Activated CD4-positive, alpha-beta memory T cell treated with anti-CD3 and anti-CD28 coated beads for 36 hours (primary cell): ENCODE measurements at regions of chr14 and their contacts with region 1.

Region 1: GRCh38 chr14:68780358-68781160 is 12.3 kb downstream of the ZFP36L1 start:
- DNase-seq: peak; percentile 55
- H3K4me3 Mint-ChIP-seq: peak overlapping the region; percentile 71
- H3K27ac Mint-ChIP-seq: peak overlapping the region; percentile 80
- H3K4me1 Mint-ChIP-seq: peaks cover 78% of the 10 kb centered on the region
- H3K27me3 Mint-ChIP-seq: no peaks in the 10 kb centered on the region

Region 2: DNA sequence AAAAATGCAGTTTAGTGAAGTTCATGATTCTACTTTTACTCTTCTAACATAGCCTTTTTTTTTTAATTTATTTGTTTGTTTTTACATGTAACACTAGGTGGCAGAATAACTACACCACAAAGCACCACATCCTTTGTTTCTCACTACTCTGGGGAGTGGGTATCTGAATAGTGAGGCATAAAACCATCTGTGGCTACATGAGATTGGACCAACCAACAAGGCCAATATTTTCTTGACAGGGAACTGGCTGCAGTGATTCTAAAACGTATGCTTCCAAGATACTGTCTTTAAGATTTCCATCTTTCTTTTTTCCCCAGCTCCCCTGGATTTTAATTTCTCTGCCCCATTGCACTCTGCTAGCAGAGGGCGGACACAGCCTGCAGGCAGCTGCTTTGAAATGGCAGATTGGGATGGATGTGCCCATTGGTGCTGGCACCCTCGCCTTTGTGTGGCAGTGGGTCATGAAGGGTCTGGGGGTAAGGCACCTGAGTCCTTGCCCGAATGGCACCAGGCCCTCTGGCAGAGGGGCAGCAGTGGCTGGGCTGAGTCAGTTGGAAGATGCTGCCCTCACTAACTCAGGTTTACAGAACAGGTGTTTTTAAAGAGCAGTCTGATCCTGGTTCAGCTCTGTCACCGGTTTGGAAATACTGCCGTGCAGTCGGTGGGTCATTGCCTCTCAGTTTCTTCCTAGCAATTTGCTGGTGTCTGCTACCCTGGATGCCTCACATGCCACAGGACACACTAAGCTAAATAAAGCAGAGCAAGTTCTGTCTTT is 531.9 kb before region 1 on chr14:
- CTCF ChIA-PET with region 1: interaction called, 10 read pairs
- POLR2A ChIA-PET with region 1: interaction called, 3 read pairs
- intact Hi-C with region 1: no loop called
- DNase-seq: no peak
- H3K4me3 Mint-ChIP-seq: no peak overlapping the region
- H3K27ac Mint-ChIP-seq: no peak overlapping the region
- H3K4me1 Mint-ChIP-seq: peaks cover 36% of the 10 kb centered on the region
- H3K27me3 Mint-ChIP-seq: no peaks in the 10 kb centered on the region

Region 3: GRCh38 chr14:68663385-68664076 is 117.0 kb before region 1 on chr14:
- CTCF ChIA-PET with region 1: interaction called, 8 read pairs
- POLR2A ChIA-PET with region 1: interaction called, 17 read pairs
- intact Hi-C with region 1: loop called (anchors 2 kb)
- DNase-seq: peak; percentile 72
- H3K4me3 Mint-ChIP-seq: peak overlapping the region; percentile 24
- H3K27ac Mint-ChIP-seq: peak overlapping the region; percentile 71
- H3K4me1 Mint-ChIP-seq: peaks cover 47% of the 10 kb centered on the region
- H3K27me3 Mint-ChIP-seq: no peaks in the 10 kb centered on the region

Region 4: DNA sequence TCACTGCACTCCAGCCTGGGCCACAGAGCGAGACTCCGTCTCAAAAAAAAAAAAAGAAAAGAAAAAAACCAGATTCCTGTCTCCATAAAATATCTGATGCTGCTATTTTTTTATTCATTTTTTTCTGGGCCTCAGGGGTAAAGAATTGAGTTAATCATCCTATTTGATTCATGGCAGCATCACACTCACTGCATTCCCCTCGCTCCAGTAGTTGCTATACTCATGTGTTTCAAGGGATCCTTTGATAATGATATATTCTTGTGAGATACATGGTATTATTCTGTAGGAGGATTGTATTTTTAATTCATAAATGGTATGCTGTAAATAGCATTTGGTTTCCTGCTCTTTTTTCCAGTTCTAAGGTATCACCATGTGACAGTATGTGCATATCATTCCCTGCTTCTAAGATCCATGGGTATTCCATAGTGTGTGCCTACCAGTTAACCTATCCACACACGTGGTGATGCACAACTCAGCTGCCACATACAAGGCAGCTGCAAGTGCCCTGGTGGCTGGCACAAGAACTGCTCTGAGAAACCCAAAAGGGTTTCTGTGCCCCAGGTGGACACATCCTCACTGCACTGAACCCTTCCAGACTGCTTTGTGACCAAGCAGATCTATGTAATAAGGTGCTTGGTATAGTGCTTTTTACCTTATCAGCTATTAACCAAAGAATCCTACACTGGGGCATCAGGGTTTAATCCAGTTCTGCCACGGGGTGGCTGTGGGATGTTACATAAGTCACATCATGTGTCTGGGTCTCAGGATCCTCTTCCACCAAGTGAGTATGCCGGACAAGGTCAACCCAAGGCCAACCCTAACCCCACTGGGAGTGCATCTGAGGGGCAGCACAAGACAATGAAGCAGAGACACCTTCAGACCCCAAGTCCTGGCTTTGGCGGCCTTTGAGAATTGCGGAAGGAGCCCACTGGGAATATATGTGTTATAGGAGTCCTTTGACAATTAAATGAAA is 62.2 kb before region 1 on chr14:
- CTCF ChIA-PET with region 1: interaction called, 7 read pairs
- POLR2A ChIA-PET with region 1: interaction called, 10 read pairs
- intact Hi-C with region 1: no loop called
- DNase-seq: peak; percentile 46
- H3K4me3 Mint-ChIP-seq: no peak overlapping the region
- H3K27ac Mint-ChIP-seq: no peak overlapping the region
- H3K4me1 Mint-ChIP-seq: peaks cover 40% of the 10 kb centered on the region
- H3K27me3 Mint-ChIP-seq: no peaks in the 10 kb centered on the region

Region 5: DNA sequence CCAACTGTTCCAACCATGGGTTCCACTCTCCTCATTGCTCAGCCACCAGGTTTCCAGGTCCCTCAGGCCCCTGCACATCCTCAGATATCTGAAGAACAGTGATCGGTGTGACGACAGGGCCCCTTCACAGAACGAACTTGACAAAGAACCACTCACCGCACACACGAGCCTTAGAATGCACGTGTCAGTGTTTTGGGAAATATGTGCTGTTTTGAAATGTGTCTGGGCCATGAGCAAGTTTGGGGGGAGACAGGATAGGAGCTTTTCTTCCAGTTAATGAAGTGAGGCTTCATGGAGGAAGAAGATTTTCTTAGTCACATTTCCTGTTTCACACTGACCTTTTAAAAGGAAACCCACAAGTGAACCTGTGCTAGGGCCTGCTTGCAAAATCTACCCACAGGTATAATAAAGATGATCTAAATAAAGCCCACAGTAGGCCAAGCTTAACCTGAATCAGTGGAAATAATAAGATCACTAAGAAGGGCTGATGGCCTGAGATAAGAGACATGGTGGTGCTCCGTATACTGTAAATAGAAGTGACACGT is 46.3 kb before region 1 on chr14:
- CTCF ChIA-PET with region 1: interaction called, 4 read pairs
- POLR2A ChIA-PET with region 1: interaction called, 5 read pairs
- intact Hi-C with region 1: loop called (anchors 1 kb)
- DNase-seq: peak; percentile 68
- H3K4me3 Mint-ChIP-seq: peak overlapping the region; percentile 28
- H3K27ac Mint-ChIP-seq: peak overlapping the region; percentile 86
- H3K4me1 Mint-ChIP-seq: peaks cover 35% of the 10 kb centered on the region
- H3K27me3 Mint-ChIP-seq: no peaks in the 10 kb centered on the region

Region 6: DNA sequence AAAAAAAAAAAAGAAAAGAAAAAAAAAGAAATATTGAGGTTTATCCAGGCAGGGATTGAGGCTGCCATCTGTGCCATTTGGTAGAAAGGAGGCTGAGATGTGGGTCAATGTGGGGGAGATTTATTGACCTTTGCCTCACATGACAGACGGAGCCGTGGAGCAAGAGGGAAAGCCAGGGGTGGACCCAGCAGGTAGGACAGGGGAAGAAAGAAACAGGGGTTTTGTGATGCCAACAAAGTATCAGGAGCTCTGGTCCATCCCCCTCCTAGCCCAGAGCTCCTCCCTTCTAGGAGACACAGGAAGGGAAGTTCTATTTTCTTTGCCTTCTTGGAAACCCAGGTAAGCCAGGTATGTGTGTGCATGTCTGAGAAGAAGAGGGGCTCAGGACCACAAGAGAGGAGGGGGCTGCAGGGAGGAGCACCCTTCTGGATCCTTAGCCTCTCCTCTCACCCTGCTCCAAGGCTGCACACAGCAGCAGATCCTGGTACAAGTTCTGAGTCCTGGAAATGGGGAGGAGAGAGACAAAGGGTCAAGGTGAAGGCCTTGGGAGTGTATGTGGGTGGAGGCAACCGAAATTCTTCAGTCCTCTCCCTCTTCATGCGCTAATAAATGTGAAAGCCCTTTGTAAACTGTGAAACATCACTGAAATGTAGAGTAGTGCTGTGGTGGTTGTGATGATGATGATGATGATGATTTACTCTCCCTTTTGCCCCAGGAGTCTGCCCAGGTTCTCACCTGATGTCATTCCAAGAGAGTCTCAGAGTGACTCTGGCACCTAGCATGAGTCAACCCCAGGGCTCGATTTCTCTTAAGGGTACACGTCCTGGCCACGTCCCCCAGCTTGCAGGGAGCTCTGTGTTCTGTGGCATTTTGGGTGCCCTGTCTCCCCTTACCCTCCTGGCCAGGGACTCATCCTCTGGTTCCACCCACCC is 14.0 kb before region 1 on chr14:
- CTCF ChIA-PET with region 1: interaction called, 4 read pairs
- POLR2A ChIA-PET with region 1: interaction called, 3 read pairs
- intact Hi-C with region 1: loop called (anchors 1 kb)
- DNase-seq: peak; percentile 52
- H3K4me3 Mint-ChIP-seq: no peak overlapping the region
- H3K27ac Mint-ChIP-seq: no peak overlapping the region
- H3K4me1 Mint-ChIP-seq: peaks cover 34% of the 10 kb centered on the region
- H3K27me3 Mint-ChIP-seq: no peaks in the 10 kb centered on the region

Region 7: DNA sequence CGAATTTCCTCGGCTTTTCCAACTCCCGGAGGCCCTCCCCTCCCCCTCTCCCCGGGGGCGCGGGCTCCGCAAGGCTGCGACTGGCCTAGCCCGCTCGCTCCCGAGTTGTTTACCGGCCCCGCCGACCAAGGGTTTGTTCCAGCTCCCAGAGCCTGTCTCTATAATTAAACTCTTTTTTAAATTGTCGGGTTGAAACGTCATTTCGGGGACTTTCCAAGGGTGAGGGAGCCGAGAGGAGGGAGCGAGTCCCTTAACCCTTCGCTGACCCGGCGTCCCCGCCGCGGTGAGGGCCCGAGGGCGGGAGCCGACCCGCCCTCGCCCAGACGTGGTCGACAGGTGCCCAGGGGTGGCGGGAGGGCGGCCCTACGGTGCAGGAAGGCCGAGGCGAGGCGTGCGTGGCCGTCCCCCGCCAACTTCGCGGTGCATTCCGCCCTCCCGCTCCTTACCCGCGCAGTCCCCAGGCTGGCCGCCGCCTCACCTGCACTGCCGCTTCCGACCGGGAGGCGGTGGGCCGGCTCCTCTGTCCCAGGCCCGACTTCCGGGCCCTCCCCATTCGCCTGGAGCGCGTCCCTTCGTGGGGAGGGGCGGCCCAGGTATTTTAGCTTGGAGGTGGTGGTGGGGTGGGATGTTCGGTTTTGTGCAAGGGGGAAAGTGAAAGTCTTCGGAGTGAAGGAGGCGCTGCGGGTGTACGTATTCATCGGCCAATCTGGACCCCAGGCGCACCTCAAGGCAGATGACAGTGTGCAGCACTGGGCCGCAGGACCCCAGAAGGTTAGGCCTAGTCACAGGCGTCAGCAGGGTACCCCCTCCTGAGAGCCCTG is 15.2 kb after region 1 on chr14:
- CTCF ChIA-PET with region 1: interaction called, 52 read pairs
- POLR2A ChIA-PET with region 1: interaction called, 106 read pairs
- intact Hi-C with region 1: loop called (anchors 2 kb)
- DNase-seq: peak; percentile 87
- H3K4me3 Mint-ChIP-seq: peak overlapping the region; percentile 89
- H3K27ac Mint-ChIP-seq: peak overlapping the region; percentile 99
- H3K4me1 Mint-ChIP-seq: peaks cover 48% of the 10 kb centered on the region
- H3K27me3 Mint-ChIP-seq: no peaks in the 10 kb centered on the region